PC-9 (cell line): ENCODE measurements at regions of chr3 and their contacts with region 1.

Region 1: DNA sequence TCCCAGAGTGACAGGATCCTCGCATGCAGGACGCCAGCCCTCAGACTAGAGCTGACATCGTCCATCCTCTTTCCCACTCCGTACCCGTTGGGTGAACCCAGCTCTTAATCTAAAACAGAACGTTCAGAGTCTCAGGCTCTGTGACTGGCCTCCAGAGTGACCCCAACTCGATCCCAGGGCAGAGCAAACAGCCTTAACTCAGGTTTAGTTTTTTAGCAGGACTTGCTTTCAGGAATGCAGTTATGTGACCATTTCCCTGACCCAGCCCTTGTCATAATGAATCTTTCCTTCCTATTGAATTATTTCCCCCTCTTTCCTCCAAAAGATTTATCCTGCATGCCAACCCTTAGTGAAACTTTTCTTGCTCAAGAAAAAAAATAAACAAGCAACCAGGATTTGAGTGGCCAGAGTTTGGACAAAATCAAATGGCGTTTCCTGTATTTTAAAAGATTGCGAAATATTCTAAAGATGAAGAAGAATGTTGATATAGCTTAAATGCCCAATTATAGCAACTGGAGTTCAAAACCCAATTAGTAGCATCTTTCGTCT is 47.8 kb upstream of the RARB start:
- DNase-seq: no peak
- H3K4me3 ChIP-seq: no peak overlapping the region
- H3K27ac ChIP-seq: no peak overlapping the region
- H3K4me1 ChIP-seq: no peaks in the 10 kb centered on the region
- H3K27me3 ChIP-seq: no peaks in the 10 kb centered on the region
- CTCF ChIP-seq: no peak

Region 2: GRCh38 chr3:25156626-25157025 is 223.7 kb before region 1 on chr3:
- CTCF ChIA-PET with region 1: no interaction called
- POLR2A ChIA-PET with region 1: interaction called, 15 read pairs
- intact Hi-C with region 1: no loop called
- DNase-seq: peak; percentile 6 to 38
- H3K4me3 ChIP-seq: no peak overlapping the region
- H3K27ac ChIP-seq: no peak overlapping the region
- H3K4me1 ChIP-seq: no peaks in the 10 kb centered on the region
- H3K27me3 ChIP-seq: no peaks in the 10 kb centered on the region
- CTCF ChIP-seq: no peak

Region 3: GRCh38 chr3:25313286-25313685 is 67.0 kb before region 1 on chr3:
- CTCF ChIA-PET with region 1: no interaction called
- POLR2A ChIA-PET with region 1: no interaction called
- intact Hi-C with region 1: no loop called
- DNase-seq: no peak
- H3K4me3 ChIP-seq: no peak overlapping the region
- H3K27ac ChIP-seq: no peak overlapping the region
- H3K4me1 ChIP-seq: no peaks in the 10 kb centered on the region
- H3K27me3 ChIP-seq: no peaks in the 10 kb centered on the region
- CTCF ChIP-seq: no peak

Region 4: DNA sequence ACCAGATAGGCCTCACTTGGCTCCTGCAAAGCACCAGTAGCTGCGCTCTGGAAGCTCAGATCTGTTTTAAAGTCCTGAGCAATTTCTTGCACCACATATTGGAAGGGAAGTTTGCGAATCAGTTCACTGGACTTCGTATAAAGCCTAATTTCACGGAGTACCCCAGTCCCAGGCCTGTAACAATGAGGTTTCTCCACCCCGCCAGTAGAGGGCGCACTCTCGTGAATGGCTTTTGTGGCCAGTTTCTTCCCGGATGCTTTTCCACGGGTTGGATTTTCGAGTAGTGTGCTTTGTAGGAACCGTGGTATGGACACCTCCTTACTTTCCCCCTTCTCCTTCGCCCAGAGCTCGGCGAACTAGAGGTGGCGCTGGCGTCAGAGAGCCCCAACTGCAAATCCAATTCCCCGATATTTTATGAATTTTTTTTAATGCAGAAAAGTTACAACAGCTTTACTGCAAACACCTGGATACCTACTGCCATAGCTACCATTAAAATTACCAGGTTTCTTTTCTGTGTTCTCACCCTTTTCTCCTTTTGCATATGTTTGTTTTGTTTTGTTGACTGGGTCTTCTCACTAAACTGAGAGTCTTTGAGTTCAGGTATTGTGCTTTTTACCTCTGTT is 61.0 kb after region 1 on chr3:
- CTCF ChIA-PET with region 1: no interaction called
- POLR2A ChIA-PET with region 1: no interaction called
- intact Hi-C with region 1: no loop called
- DNase-seq: no peak
- H3K4me3 ChIP-seq: no peak overlapping the region
- H3K27ac ChIP-seq: no peak overlapping the region
- H3K4me1 ChIP-seq: no peaks in the 10 kb centered on the region
- H3K27me3 ChIP-seq: no peaks in the 10 kb centered on the region
- CTCF ChIP-seq: peak; percentile 85

Region 5: GRCh38 chr3:25744470-25744869 is 364.2 kb after region 1 on chr3:
- CTCF ChIA-PET with region 1: no interaction called
- POLR2A ChIA-PET with region 1: no interaction called
- intact Hi-C with region 1: no loop called
- DNase-seq: no peak
- H3K4me3 ChIP-seq: no peak overlapping the region
- H3K27ac ChIP-seq: no peak overlapping the region
- H3K4me1 ChIP-seq: peaks cover 7% of the 10 kb centered on the region
- H3K27me3 ChIP-seq: no peaks in the 10 kb centered on the region
- CTCF ChIP-seq: no peak